ENCODE measurements at regions of chr6 and their contacts with region 1.

Region 1: DNA sequence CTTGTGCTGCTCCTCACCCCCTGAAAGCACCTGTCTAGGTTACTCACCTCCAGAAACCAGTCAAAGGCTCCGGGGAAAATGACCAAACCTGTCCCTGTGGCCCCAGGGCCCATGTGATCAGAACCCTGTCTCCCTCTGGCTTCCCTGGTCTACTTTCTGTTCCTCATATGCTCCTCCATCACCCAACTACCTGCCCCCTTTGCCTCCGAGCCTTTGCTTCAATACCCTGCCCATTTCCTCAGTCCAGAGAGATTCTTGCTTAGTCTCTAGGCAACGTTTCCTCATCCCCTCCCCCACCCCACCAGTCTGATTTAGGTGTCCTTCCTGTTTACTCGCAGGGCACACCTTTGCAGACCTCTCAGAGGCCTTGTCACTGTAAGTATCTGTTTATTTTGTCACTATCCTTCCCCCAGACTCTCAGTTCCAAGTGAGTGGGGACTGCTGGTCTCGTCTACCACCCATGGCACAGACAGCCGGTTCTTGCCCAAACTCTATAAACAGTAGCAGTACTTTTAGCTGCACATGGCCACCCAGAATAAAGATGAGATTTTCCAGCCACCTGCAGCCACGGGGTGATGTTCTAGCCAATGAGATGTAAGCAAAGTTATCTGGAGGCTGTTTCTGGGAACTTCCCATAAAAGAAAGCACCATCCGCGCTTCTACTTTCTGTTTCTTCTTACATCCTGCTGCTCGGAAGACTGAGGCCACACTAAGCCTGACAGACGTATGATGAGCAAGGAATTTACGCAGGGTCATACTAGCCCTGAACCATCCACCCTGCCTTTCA is 13.3 kb downstream of the ELOVL5 start:
- DNase-seq: no peak
- H3K4me3 ChIP-seq: no peak overlapping the region
- H3K27ac ChIP-seq: peak overlapping the region in 2 of 5 donors; percentile 48 to 70
- H3K4me1 ChIP-seq: peaks cover 0 to 60% of the 10 kb centered on the region in 2 donors
- H3K27me3 ChIP-seq: no peaks in the 10 kb centered on the region
- CTCF ChIP-seq: no peak
- POLR2A ChIP-seq: no peak

Region 2: DNA sequence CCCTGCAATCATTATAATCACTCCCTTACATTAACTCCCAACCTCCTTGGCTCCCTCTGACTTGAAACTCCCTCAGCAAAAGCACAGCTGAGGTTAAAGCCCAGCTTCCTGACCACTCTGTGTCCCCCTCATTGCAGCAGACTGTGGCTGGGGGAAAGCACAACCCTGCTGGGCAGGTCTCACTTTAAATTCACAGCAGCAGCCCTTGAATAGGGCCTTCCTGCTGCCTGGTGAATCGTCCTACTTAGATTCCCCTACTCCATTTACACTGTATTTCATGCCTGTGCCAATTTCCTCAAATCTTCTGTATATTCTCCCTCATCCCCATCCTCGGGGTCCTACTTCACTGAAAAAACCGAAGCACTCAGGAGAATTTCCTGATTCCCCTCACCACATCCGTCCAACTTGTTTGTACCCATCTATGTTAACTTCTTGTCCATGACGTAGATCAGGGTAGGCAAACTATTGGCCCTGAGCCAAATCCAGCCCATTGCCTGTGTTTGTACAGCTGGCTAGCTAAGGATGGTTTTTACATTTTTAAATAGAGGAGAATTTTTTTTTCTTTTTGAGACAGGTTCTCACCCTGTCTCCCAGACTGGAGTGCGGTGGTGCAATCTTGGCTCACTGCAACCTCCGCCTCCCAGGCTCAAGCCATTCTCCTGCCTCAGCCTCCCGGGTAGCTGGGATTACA is 155.3 kb before region 1 on chr6:
- intact Hi-C with region 1: loop called (anchors 10 kb)
- DNase-seq: peak in 5 of 7 donors; percentile 13 to 65 (median 35)
- H3K4me3 ChIP-seq: no peak overlapping the region
- H3K27ac ChIP-seq: peak overlapping the region in 1 of 5 donors; percentile 1
- H3K4me1 ChIP-seq: peaks cover 0 to 13% of the 10 kb centered on the region in 2 donors
- H3K27me3 ChIP-seq: no peaks in the 10 kb centered on the region
- CTCF ChIP-seq: no peak
- POLR2A ChIP-seq: no peak

Region 3: GRCh38 chr6:53263917-53264316 is 71.5 kb before region 1 on chr6:
- intact Hi-C with region 1: loop called in 1 of 2 experiments (anchors 2 kb)
- DNase-seq: no peak
- H3K4me3 ChIP-seq: no peak overlapping the region
- H3K27ac ChIP-seq: peak overlapping the region in 3 of 5 donors; percentile 35 to 45 (median 37)
- H3K4me1 ChIP-seq: peaks cover 19 to 32% of the 10 kb centered on the region in 2 donors
- H3K27me3 ChIP-seq: no peaks in the 10 kb centered on the region
- CTCF ChIP-seq: no peak
- POLR2A ChIP-seq: no peak

Region 4: DNA sequence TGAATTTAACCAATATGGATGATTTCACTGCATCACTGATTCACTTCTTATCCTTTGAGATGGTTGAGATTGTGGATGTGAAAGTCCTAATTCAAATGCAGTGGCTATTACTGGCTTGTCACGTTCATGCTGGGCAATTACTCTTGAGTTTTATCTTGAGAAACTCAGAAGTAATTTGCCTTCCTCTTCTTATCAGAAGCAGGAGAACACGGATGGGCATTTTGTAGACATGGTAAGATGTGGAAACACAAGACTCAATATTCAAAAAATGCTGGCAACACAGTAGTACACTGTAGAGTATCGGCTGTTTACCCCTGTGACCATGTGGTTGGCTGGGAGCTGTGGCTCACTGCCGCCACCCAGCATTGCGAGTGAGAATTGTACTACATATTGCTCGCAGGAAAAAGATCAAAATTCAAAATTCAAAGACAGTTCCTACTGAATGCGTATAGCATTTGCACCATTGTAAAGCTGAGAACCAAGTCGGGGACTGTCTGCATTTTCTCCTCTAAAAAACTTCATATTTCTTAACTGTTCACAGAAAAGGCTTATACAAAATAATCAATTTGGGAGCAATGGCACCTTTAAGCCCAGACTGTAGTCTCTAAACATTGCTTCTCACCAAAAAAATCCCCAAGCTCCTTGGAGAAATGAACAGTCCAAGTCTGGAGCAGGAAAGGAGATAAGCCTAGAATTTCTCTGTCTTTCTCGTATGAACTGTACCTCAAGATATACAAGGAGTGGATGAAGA is 75.3 kb after region 1 on chr6:
- intact Hi-C with region 1: no loop called
- DNase-seq: peak; percentile 50 to 76 (median 65)
- H3K4me3 ChIP-seq: no peak overlapping the region
- H3K27ac ChIP-seq: no peak overlapping the region
- H3K4me1 ChIP-seq: peaks cover 0 to 5% of the 10 kb centered on the region in 2 donors
- H3K27me3 ChIP-seq: no peaks in the 10 kb centered on the region
- CTCF ChIP-seq: peak; percentile 39 to 81 (median 71)
- POLR2A ChIP-seq: no peak